HEK293 (cell line): ENCODE measurements at regions of chr1 and their contacts with region 1.

Region 1: GRCh38 chr1:92754000-92754718 is 30.7 kb downstream of the EVI5 start:
- H3K4me3 ChIP-seq: no peak overlapping the region
- H3K27ac ChIP-seq: no peak overlapping the region
- H3K4me1 ChIP-seq: peaks cover 3% of the 10 kb centered on the region
- CTCF ChIP-seq: no peak

Region 2: DNA sequence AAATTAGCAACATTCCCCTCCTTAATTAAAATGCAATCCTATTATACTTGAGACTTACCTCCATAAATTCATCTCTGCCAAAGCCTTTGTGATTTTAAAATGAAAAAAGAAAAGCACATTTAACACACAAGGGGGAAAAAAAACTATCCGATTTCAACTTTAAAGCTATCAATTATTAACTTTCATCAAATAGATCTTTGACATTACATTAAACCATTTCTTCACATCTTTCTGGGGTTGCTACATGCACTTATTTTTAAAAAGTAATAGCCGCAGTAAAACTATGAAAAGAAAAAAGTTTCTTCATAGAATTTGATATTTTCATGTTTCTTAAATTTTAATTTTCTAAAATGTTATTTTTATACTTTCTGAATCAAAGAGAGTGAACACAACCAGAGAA is 40.2 kb before region 1 on chr1:
- CTCF ChIA-PET with region 1: no interaction called
- POLR2A ChIA-PET with region 1: no interaction called
- H3K4me3 ChIP-seq: no peak overlapping the region
- H3K27ac ChIP-seq: no peak overlapping the region
- H3K4me1 ChIP-seq: peaks cover 12% of the 10 kb centered on the region
- CTCF ChIP-seq: no peak

Region 3: GRCh38 chr1:92817986-92818764 is 64.0 kb after region 1 on chr1:
- CTCF ChIA-PET with region 1: interaction called, 32 read pairs
- POLR2A ChIA-PET with region 1: no interaction called
- H3K4me3 ChIP-seq: no peak overlapping the region
- H3K27ac ChIP-seq: no peak overlapping the region
- H3K4me1 ChIP-seq: no peaks in the 10 kb centered on the region
- CTCF ChIP-seq: peak; percentile 27; the same call in 1 of the 2 replicates